ENCODE measurements at regions of chr16 and their contacts with region 1.

Region 1: DNA sequence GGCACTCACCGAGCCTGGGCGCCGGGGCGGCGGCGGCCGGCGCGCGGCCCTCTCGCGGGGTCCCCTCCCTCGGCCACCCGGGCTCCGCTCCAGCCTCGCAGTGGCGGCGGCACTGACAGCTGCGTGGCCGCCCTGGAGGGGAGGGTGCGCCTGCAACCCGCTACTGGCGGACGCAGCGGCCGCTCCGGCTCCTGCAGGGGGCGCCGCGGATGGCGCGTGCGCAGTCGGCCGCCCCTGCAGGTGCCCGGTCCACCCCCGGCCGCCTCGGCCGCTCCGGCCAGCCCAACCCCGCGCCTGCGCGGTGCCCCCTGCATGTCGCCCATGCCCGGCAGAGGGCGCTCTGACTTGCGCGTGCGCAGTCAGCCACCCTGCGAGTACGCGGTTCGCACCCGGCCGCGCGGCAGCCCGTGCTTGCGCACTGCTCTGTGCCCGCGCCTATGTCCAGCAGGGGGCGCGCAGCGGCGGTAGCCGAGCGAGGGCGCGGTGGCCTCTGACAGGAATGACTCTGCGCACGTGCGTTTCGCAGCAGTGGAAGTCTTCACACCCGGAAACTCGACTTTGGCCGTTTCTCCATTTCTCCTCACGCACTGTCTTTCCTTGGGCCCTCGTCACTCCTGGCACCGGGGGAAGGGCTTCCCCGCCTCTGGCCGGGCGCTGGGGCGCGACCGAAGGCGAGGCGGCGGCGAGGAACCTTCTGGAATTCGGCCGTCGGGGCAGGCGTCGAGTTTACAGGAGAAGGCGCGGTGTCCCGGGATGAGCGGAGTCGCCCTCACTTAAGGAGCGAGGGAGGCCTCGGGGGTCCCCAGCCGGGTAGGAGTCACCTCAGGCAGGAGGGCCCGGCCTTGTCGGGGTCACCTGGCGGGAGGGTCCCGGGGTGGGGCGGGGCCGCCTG is at the start of gene ABCA3:
- DNase-seq: peak; percentile 94 to 98
- ATAC-seq: peak; percentile 97
- H3K4me3 ChIP-seq: peak within 1 kb of the TSS; percentile 32 to 79
- H3K27ac ChIP-seq: no peak within 1 kb of the TSS
- H3K4me1 ChIP-seq: no peaks in the 10 kb centered on the region
- H3K27me3 ChIP-seq: no peaks in the 10 kb centered on the region
- total RNA-seq, gene ABCA3: 11.7 to 19.3 TPM

Region 2: GRCh38 chr16:2429034-2429770 is 88.4 kb after region 1 on chr16 and contains the start of gene CCNF:
- intact Hi-C with region 1: loop called (anchors 2 to 5 kb)
- DNase-seq: peak; percentile 98 to 99
- ATAC-seq: peak; percentile 97
- H3K4me3 ChIP-seq: peak within 1 kb of the TSS; percentile 54 to 61
- H3K27ac ChIP-seq: no peak within 1 kb of the TSS
- H3K4me1 ChIP-seq: no peaks in the 10 kb centered on the region
- H3K27me3 ChIP-seq: no peaks in the 10 kb centered on the region
- total RNA-seq, gene CCNF: 0.91 to 3.6 TPM

Measured in aorta (tissue), 5 donors.